GM12878 (cell line): ENCODE measurements at regions of chr3 and their contacts with region 1.

Region 1: DNA sequence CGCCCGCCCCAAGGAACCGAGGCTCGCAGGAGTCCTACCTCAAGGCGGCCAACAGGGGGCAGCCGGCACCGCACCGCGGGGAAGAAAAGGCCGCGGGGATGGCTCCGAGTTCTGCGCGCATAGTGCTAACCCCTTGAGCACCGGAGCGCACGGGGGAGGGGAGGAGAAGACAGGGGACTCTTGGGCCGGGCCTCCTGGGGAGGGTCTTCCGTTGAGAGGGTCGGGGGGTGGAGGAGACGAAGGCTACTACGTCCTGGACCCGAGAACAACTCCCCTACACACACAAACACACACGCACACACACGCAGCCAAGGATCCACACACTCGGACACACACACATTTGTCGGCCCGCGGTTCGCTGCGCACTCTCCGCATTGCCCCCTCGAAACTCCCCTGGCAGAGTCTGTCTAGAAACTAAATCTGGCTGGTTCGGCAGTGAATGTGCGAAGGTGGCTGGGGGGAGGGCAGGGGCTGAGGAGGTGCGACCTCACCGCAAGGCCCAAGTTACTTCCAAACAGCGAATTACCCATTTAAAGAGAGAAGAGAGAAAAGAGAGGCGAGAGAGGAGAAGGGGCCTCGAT is 1.8 kb downstream of the WNT5A start:
- DNase-seq: peak; percentile 32
- ATAC-seq: peak; percentile 75
- H3K4me3 ChIP-seq: peak overlapping the region; percentile 86
- H3K27ac ChIP-seq: no peak overlapping the region
- H3K4me1 ChIP-seq: peaks cover 18% of the 10 kb centered on the region
- H3K27me3 ChIP-seq: peaks cover 18 to 47% of the 10 kb centered on the region in 2 experiments
- CTCF ChIP-seq: peak; percentile 52 to 85 (median 76)
- EP300 ChIP-seq: no peak
- POLR2A ChIP-seq: no peak
- RAD21 ChIP-seq: peak; percentile 91

Region 2: GRCh38 chr3:54853573-54854404 is 631.5 kb before region 1 on chr3:
- CTCF ChIA-PET with region 1: no interaction called
- POLR2A ChIA-PET with region 1: no interaction called
- RAD21 ChIA-PET with region 1: no interaction called
- SMC1A ChIA-PET with region 1: no interaction called
- in situ Hi-C with region 1: no loop called
- intact Hi-C with region 1: loop called (anchors 5 kb)
- DNase-seq: no peak
- ATAC-seq: peak; percentile 98
- H3K4me3 ChIP-seq: no peak overlapping the region
- H3K27ac ChIP-seq: no peak overlapping the region
- H3K4me1 ChIP-seq: no peaks in the 10 kb centered on the region
- H3K27me3 ChIP-seq: no peaks in the 10 kb centered on the region
- CTCF ChIP-seq: peak; percentile 76 to 90 (median 81)
- EP300 ChIP-seq: no peak
- POLR2A ChIP-seq: no peak
- RAD21 ChIP-seq: peak; percentile 77

Region 3: DNA sequence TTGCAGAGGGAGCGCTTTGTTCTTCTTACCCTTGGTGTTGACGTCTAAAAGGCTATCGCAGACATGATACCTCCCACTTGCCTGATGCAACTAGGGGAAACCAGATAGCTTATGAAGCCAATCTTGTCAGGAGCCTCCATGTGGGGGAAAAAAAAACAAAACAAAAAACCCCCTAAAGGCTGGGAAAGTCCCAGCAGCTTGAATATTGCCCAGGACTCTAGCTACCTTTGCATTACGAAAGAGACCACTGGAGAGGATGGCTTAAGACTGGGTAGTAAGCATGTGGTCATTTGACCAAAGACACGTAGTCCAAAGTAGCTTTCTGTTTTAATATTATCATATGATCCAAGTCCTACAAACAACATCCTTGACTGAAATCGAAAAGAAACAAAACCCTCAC is 122.5 kb after region 1 on chr3:
- CTCF ChIA-PET with region 1: no interaction called
- POLR2A ChIA-PET with region 1: no interaction called
- RAD21 ChIA-PET with region 1: interaction called, 6 read pairs
- SMC1A ChIA-PET with region 1: no interaction called
- in situ Hi-C with region 1: no loop called
- intact Hi-C with region 1: loop called (anchors 5 kb)
- DNase-seq: peak; percentile 91
- ATAC-seq: peak; percentile 94
- H3K4me3 ChIP-seq: no peak overlapping the region
- H3K27ac ChIP-seq: no peak overlapping the region
- H3K4me1 ChIP-seq: peaks cover 26% of the 10 kb centered on the region
- H3K27me3 ChIP-seq: no peaks in the 10 kb centered on the region
- CTCF ChIP-seq: no peak
- EP300 ChIP-seq: peak in 1 of 2 experiments; percentile 80; a peak in 3 of 4 replicates
- POLR2A ChIP-seq: no peak
- RAD21 ChIP-seq: no peak

Region 4: GRCh38 chr3:55654123-55654760 is 168.9 kb after region 1 on chr3:
- CTCF ChIA-PET with region 1: no interaction called
- POLR2A ChIA-PET with region 1: no interaction called
- RAD21 ChIA-PET with region 1: no interaction called
- SMC1A ChIA-PET with region 1: no interaction called
- in situ Hi-C with region 1: no loop called
- intact Hi-C with region 1: loop called (anchors 10 kb)
- DNase-seq: peak; percentile 73
- ATAC-seq: peak; percentile 90
- H3K4me3 ChIP-seq: no peak overlapping the region
- H3K27ac ChIP-seq: peak overlapping the region; percentile 53
- H3K4me1 ChIP-seq: peaks cover 38% of the 10 kb centered on the region
- H3K27me3 ChIP-seq: no peaks in the 10 kb centered on the region
- CTCF ChIP-seq: no peak
- EP300 ChIP-seq: no peak
- POLR2A ChIP-seq: no peak
- RAD21 ChIP-seq: no peak

Region 5: DNA sequence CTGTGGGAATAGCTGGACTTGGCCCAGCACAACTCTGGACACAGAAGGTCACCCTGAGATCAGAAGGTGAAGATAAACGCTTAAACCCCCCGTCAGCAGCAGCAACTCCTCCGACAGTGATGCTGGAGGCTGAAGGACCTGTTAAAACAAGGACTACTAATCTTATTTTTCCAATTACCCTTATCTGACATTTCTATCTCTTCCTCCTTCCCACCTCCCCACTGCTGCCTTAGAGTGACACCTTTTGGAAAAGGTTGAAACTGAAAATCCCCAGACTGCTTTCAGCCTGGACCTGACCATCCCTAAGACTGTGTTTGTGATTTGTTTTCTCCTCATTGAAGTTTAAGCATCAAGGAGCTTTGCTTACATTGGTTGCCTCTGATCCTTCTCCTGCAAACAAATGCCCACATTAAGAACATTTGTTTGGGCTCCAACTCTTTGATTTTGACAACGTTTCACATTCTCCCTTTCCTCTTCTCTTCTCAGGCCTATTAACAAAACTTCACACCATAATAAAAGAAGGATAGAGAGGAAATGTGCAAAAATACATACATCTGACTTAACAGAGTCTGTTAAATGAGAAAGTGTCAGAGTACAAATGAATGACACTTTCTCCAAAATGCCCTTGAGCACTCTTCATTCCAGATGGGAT is 412.4 kb after region 1 on chr3:
- CTCF ChIA-PET with region 1: no interaction called
- POLR2A ChIA-PET with region 1: no interaction called
- RAD21 ChIA-PET with region 1: interaction called, 3 read pairs
- SMC1A ChIA-PET with region 1: no interaction called
- in situ Hi-C with region 1: no loop called
- intact Hi-C with region 1: loop called (anchors 5 kb)
- DNase-seq: no peak
- ATAC-seq: no peak
- H3K4me3 ChIP-seq: no peak overlapping the region
- H3K27ac ChIP-seq: no peak overlapping the region
- H3K4me1 ChIP-seq: no peaks in the 10 kb centered on the region
- H3K27me3 ChIP-seq: no peaks in the 10 kb centered on the region
- CTCF ChIP-seq: peak in 2 of 3 experiments; percentile 11 to 19; a peak in 2 of 6 replicates
- EP300 ChIP-seq: no peak
- POLR2A ChIP-seq: no peak
- RAD21 ChIP-seq: peak; percentile 31; the same call in 1 of the 2 replicates